HepG2 (cell line): ENCODE measurements at regions of chr7 and their contacts with region 1.

Region 1: DNA sequence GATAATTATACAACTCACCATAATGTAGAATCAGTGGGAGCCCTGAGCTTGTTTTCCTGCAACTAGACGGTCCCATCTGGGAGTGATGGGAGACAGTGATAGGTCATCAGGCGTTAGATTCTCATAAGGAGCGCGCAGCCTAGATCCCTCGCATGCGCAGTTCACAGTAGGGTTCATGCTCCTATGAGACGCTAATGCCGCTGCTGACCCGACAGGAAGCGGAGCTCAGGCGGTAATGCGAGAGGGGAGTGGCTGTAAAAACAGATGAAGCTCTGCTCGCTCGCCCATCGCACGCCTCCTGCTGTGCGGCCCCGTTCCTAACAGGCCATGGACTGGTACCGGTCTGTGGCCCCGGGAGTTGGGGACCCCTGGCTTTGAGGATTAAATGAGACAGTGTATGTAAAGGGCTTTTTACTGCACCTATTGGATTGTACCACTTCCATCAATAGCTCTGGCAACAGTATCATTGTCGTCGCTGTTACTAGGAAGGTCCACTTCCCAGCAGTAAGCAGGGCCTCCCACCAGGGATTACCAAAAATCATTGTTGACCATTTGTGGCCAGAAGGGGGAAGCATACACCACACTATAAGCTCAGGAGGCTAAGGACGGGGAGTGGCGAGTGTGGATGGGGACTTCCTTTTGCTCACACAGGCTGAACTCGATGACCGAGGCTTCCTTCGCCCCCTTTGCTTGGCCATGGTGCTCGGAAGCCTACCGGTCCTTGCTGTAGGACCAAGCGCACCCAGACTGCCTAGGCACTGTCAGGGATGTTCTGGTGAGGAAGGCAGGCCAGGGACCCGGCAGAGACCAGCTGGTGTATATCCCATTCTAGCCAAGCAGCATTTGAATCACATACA is 26.4 kb downstream of the AKR1B1 start:
- DNase-seq: peak; percentile 87
- ATAC-seq: peak; percentile 96
- H3K4me3 ChIP-seq: peak overlapping the region; percentile 47 to 71 (median 54)
- H3K27ac ChIP-seq: no peak overlapping the region
- H3K4me1 ChIP-seq: peaks cover 19% of the 10 kb centered on the region
- H3K27me3 ChIP-seq: no peaks in the 10 kb centered on the region
- CTCF ChIP-seq: peak; percentile 95
- EP300 ChIP-seq: no peak
- POLR2A ChIP-seq: no peak
- RAD21 ChIP-seq: peak; percentile 84

Region 2: GRCh38 chr7:134458806-134459698 is 26.5 kb after region 1 on chr7 and contains the start of gene AKR1B1:
- CTCF ChIA-PET with region 1: no interaction called
- POLR2A ChIA-PET with region 1: interaction called, 8 read pairs
- in situ Hi-C with region 1: no loop called
- intact Hi-C with region 1: loop called (anchors 1 kb)
- DNase-seq: peak; percentile 84
- ATAC-seq: peak; percentile 97
- H3K4me3 ChIP-seq: peak within 1 kb of the TSS; percentile 78 to 89 (median 80)
- H3K27ac ChIP-seq: peak within 1 kb of the TSS; percentile 49
- H3K4me1 ChIP-seq: peaks cover 30% of the 10 kb centered on the region
- H3K27me3 ChIP-seq: no peaks in the 10 kb centered on the region
- CTCF ChIP-seq: peak; percentile 51
- EP300 ChIP-seq: no peak
- POLR2A ChIP-seq: peak; percentile 21 to 78; a peak in 2 of 4 replicates
- RAD21 ChIP-seq: no peak
- total RNA-seq, gene AKR1B1: 89.9 and 123 TPM in 2 replicates

Region 3: DNA sequence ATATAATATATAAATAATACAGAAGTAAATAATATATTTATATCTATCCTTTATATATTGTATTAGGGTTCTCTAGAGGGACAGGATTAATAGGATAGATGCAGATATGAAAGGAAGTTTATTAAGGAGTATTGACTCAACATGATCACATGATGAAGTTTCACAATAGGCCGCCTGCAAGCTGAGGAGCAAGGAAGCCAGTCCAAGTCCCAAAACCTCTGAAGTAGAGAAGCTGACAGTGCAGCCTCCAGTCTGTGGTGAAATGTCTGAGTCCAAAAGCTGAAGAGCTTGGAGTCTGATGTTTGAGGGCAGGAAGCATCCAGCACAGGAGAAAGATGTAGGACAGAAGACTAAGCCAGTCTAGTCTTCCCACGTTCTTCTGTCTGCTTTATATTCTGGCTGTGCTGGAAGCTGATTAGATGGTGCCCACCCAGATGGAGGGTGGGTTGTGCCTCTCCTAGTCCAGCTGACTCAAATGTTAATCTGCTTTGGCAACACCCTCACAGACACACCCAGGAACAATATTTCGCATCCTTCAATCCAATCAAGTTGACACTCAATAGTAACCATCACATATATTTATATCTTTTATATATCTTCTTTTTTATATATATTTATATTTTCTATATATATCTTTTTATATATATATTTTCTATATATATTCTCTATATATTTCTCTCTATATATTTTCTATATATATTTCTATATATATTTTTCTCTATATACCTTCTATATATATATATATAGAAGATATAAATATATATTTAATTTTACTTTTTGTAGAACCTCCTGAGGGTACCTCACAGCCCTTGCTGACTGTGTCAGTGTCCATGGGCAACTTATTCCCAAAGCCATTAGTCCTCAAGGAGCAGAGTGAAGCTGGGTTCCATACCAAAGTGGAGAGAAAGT is 70.2 kb after region 1 on chr7:
- CTCF ChIA-PET with region 1: no interaction called
- POLR2A ChIA-PET with region 1: no interaction called
- in situ Hi-C with region 1: no loop called
- intact Hi-C with region 1: no loop called
- DNase-seq: no peak
- ATAC-seq: no peak
- H3K4me3 ChIP-seq: no peak overlapping the region
- H3K27ac ChIP-seq: no peak overlapping the region
- H3K4me1 ChIP-seq: no peaks in the 10 kb centered on the region
- H3K27me3 ChIP-seq: 0 out of 5 replicates have a peak, but pooled peaks cover 0 to 4% of the 10 kb centered on the region in 2 experiments
- CTCF ChIP-seq: no peak
- EP300 ChIP-seq: no peak
- POLR2A ChIP-seq: no peak
- RAD21 ChIP-seq: no peak

Region 4: DNA sequence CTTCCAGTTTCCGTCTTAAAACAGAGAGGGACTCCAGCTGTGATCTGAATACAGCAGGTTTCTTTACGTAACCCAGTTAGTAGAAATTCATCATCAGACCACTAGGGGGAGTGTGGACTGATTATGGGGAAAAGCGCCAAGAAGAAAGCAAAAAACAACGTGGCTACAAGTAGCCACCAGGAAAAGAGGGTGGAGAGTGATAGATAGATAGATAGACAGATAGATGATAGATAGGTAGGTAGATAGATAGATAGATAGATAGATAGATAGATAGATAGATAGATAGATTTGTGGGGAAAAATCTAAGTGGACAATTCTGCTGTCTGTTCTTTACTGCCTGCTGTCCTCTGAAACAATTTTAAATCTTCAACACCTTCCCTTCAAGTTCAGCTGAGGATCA is 82.1 kb after region 1 on chr7:
- CTCF ChIA-PET with region 1: interaction called, 68 read pairs
- POLR2A ChIA-PET with region 1: no interaction called
- in situ Hi-C with region 1: loop called (anchors 5 kb)
- intact Hi-C with region 1: loop called (anchors 1 kb)
- DNase-seq: peak; percentile 66
- ATAC-seq: peak; percentile 73
- H3K4me3 ChIP-seq: no peak overlapping the region
- H3K27ac ChIP-seq: no peak overlapping the region
- H3K4me1 ChIP-seq: no peaks in the 10 kb centered on the region
- H3K27me3 ChIP-seq: peaks cover 2 to 5% of the 10 kb centered on the region in 2 experiments; a peak in 3 of 5 replicates
- CTCF ChIP-seq: peak; percentile 72
- EP300 ChIP-seq: no peak
- POLR2A ChIP-seq: no peak
- RAD21 ChIP-seq: no peak

Region 5: DNA sequence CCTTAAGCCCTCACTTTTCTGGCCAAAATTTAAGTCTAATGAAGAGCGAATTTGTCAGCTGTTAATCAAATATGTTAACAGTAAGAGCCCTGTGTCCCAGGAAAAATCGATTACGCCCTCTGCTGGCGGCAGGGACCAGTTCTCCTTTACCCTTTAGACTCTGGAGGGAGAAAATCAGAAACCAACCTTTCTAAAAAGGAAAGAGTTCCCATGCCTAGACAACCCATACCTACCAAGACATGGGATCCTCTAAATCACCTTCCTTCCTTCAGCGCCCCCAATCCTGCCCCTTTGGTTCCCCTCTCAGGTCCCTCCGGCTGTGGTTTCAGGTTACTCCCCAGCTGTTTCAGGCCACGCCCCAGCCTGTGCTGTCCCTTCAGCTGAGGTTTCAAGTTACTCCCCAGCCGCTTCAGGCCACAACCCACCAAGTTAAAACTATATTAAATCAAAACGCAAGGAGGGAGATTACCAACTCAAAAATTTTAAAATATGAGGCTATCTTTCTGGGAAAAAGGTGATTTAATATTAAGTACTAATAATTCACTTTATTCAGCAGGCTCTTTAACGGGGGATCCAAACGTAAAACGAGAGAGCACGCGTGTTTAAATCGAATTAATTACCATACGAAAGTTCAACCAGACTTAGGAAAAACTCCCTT is 115.0 kb after region 1 on chr7:
- CTCF ChIA-PET with region 1: interaction called, 11 read pairs
- POLR2A ChIA-PET with region 1: interaction called, 3 read pairs
- in situ Hi-C with region 1: no loop called
- intact Hi-C with region 1: loop called (anchors 1 kb)
- DNase-seq: peak; percentile 50
- ATAC-seq: peak; percentile 90
- H3K4me3 ChIP-seq: peak overlapping the region; percentile 39 to 63 (median 44); a peak in 5 of 6 replicates
- H3K27ac ChIP-seq: no peak overlapping the region
- H3K4me1 ChIP-seq: peaks cover 21% of the 10 kb centered on the region
- H3K27me3 ChIP-seq: peaks cover 0 to 38% of the 10 kb centered on the region in 2 experiments; a peak in 3 of 5 replicates
- CTCF ChIP-seq: peak; percentile 79
- EP300 ChIP-seq: no peak
- POLR2A ChIP-seq: no peak
- RAD21 ChIP-seq: peak; percentile 50; the same call in 1 of the 2 replicates

Region 6: DNA sequence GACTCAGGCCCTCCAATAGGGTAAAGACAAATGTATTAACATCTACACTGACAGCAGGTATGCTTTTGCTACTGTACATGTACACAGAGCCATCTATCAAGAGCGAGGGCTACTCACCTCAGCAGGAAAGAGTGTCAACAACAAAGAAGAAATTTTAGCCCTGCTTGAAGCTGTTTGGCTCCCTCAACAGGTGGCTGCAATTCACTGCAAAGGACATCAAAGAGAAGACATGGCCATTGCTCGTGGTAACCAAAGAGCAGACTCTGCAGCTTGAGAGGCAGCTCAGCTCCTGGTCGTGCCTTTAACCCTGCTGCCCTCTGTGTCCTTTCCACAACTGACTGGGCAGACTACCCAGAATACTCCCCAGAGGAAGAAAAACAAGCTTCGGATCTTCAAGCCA is 121.5 kb after region 1 on chr7:
- CTCF ChIA-PET with region 1: interaction called, 4 read pairs
- POLR2A ChIA-PET with region 1: no interaction called
- in situ Hi-C with region 1: no loop called
- intact Hi-C with region 1: loop called (anchors 1 kb)
- DNase-seq: peak; percentile 37
- ATAC-seq: peak; percentile 75
- H3K4me3 ChIP-seq: no peak overlapping the region
- H3K27ac ChIP-seq: no peak overlapping the region
- H3K4me1 ChIP-seq: peaks cover 13% of the 10 kb centered on the region
- H3K27me3 ChIP-seq: peaks cover 4 to 66% of the 10 kb centered on the region in 2 experiments; a peak in 4 of 5 replicates
- CTCF ChIP-seq: peak; percentile 67
- EP300 ChIP-seq: no peak
- POLR2A ChIP-seq: no peak
- RAD21 ChIP-seq: no peak